CD4-positive, alpha-beta T cell (primary cell): ENCODE measurements at regions of chr3 and their contacts with region 1.

Region 1: GRCh38 chr3:42118762-42119361 is 27.7 kb downstream of the TRAK1 start:
- DNase-seq: peak in 4 of 14 experiments; percentile 15 to 32 (median 18)
- ATAC-seq: no peak
- H3K4me3 ChIP-seq: no peak overlapping the region
- H3K4me3 Mint-ChIP-seq: no peak overlapping the region
- H3K27ac ChIP-seq: no peak overlapping the region
- H3K27ac Mint-ChIP-seq: no peak overlapping the region
- H3K4me1 ChIP-seq: no peaks in the 10 kb centered on the region
- H3K4me1 Mint-ChIP-seq: peaks cover 18% of the 10 kb centered on the region
- H3K27me3 ChIP-seq: no peaks in the 10 kb centered on the region
- H3K27me3 Mint-ChIP-seq: no peaks in the 10 kb centered on the region
- CTCF ChIP-seq: no peak

Region 2: GRCh38 chr3:42228806-42229205 is 109.9 kb after region 1 on chr3:
- CTCF ChIA-PET with region 1: no interaction called
- POLR2A ChIA-PET with region 1: no interaction called
- intact Hi-C with region 1: loop called (anchors 1 kb)
- DNase-seq: peak in 1 of 14 experiments; percentile 19
- ATAC-seq: no peak
- H3K4me3 ChIP-seq: no peak overlapping the region
- H3K4me3 Mint-ChIP-seq: no peak overlapping the region
- H3K27ac ChIP-seq: no peak overlapping the region
- H3K27ac Mint-ChIP-seq: no peak overlapping the region
- H3K4me1 ChIP-seq: no peaks in the 10 kb centered on the region
- H3K4me1 Mint-ChIP-seq: no peaks in the 10 kb centered on the region
- H3K27me3 ChIP-seq: no peaks in the 10 kb centered on the region
- H3K27me3 Mint-ChIP-seq: no peaks in the 10 kb centered on the region
- CTCF ChIP-seq: no peak